IMR-90 (cell line): ENCODE measurements at regions of chr3 and their contacts with region 1.

Region 1: DNA sequence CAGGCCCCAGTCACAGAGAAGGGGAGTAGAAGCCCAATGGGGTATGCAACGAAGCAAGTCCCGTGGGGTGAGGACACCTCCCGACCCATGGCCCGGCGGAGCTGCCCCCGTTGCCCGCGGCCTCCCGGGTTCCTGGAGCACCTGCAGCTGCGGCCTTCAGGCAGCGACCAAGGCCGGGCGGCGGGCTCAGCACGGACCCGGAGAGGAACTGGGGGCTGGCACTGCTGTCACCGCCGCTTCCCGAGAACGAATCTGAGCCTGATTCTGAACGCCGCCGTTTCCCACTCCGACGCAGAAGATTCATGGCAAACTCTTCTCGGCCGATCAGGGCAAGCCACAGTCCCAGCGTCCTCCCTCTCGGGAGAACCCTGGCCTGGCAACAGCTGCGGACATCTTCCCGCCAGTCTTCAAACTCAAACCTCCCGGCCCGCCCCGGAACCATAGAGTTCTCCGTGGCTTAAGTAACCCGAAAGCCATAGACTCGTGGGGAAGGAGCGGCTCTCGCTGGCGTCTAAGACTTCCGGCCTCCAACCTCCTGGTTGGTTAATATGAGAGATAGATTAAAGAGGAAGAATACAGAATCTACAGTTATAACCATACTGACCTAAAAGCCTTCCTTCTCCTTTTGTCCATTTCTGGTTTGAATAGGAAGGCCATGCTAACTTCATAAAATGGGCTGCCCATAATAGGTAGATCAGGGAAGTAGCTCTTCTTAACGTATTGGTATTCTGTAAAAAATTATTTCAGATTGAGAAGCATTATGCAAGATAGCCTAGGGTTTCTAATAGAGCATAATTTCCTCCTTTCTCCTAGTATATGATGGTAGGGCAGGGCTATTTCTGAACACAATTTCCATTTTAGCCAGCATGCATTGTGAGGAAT is at the start of gene POLQ:
- DNase-seq: peak; percentile 95
- ATAC-seq: peak; percentile 96
- H3K4me3 ChIP-seq: peak within 1 kb of the TSS; percentile 69
- H3K27ac ChIP-seq: peak within 1 kb of the TSS; percentile 53
- H3K4me1 ChIP-seq: no peaks in the 10 kb centered on the region
- H3K27me3 ChIP-seq: no peaks in the 10 kb centered on the region
- CTCF ChIP-seq: no peak
- POLR2A ChIP-seq: peak; percentile 66; the same call in 1 of the 2 replicates
- RAD21 ChIP-seq: no peak
- total RNA-seq, gene POLQ: 5.0 and 7.5 TPM in 2 replicates

Region 2: DNA sequence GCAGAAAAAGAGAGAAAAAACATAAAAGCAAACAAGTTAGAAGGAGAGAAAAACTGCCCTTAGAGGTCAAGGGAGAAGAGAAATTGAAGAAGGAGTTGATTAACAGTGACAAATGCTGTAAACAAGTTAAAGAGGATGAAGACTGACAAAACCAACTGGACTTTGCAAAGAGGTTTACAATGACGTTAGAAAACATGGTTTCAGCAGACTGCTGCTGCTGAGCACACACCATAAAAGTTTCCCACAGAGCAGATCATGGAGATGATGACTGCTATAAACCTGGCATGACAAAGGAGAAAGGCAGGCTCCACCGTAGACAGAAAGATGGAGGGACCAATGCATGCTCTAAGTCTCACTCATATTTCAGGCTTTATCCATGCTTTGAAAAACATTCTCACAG is 78.7 kb before region 1 on chr3:
- CTCF ChIA-PET with region 1: no interaction called
- POLR2A ChIA-PET with region 1: no interaction called
- dilution Hi-C with region 1: no loop called
- in situ Hi-C with region 1: no loop called
- intact Hi-C with region 1: no loop called
- DNase-seq: no peak
- ATAC-seq: no peak
- H3K4me3 ChIP-seq: no peak overlapping the region
- H3K27ac ChIP-seq: no peak overlapping the region
- H3K4me1 ChIP-seq: peaks cover 2% of the 10 kb centered on the region; the same call in 1 of the 2 replicates
- H3K27me3 ChIP-seq: no peaks in the 10 kb centered on the region
- CTCF ChIP-seq: no peak
- POLR2A ChIP-seq: no peak
- RAD21 ChIP-seq: no peak

Region 3: GRCh38 chr3:121995161-121996137 is 449.6 kb after region 1 on chr3:
- CTCF ChIA-PET with region 1: no interaction called
- POLR2A ChIA-PET with region 1: no interaction called
- dilution Hi-C with region 1: no loop called
- in situ Hi-C with region 1: no loop called
- intact Hi-C with region 1: loop called (anchors 5 kb)
- DNase-seq: peak; percentile 75
- ATAC-seq: peak; percentile 77
- H3K4me3 ChIP-seq: no peak overlapping the region
- H3K27ac ChIP-seq: peak overlapping the region; percentile 69
- H3K4me1 ChIP-seq: peaks cover 6% of the 10 kb centered on the region
- H3K27me3 ChIP-seq: no peaks in the 10 kb centered on the region
- CTCF ChIP-seq: peak; percentile 44
- POLR2A ChIP-seq: no peak
- RAD21 ChIP-seq: 0 out of 2 replicates have a peak, but pooled peaks have one; percentile 13

Region 4: GRCh38 chr3:122101646-122102045 is 555.8 kb after region 1 on chr3:
- CTCF ChIA-PET with region 1: interaction called, 6 read pairs
- POLR2A ChIA-PET with region 1: no interaction called
- dilution Hi-C with region 1: no loop called
- in situ Hi-C with region 1: no loop called
- intact Hi-C with region 1: loop called (anchors 1 kb)
- DNase-seq: peak; percentile 66
- ATAC-seq: peak; percentile 72
- H3K4me3 ChIP-seq: no peak overlapping the region
- H3K27ac ChIP-seq: no peak overlapping the region
- H3K4me1 ChIP-seq: no peaks in the 10 kb centered on the region
- H3K27me3 ChIP-seq: peaks cover 13% of the 10 kb centered on the region
- CTCF ChIP-seq: peak; percentile 74
- POLR2A ChIP-seq: no peak
- RAD21 ChIP-seq: peak; percentile 82

Region 5: GRCh38 chr3:122299872-122300460 is 754.2 kb after region 1 on chr3:
- CTCF ChIA-PET with region 1: no interaction called
- POLR2A ChIA-PET with region 1: no interaction called
- dilution Hi-C with region 1: no loop called
- in situ Hi-C with region 1: no loop called
- intact Hi-C with region 1: loop called (anchors 5 kb)
- DNase-seq: peak; percentile 17
- ATAC-seq: no peak
- H3K4me3 ChIP-seq: no peak overlapping the region
- H3K27ac ChIP-seq: no peak overlapping the region
- H3K4me1 ChIP-seq: no peaks in the 10 kb centered on the region
- H3K27me3 ChIP-seq: no peaks in the 10 kb centered on the region
- CTCF ChIP-seq: peak; percentile 54
- POLR2A ChIP-seq: no peak
- RAD21 ChIP-seq: peak; percentile 56

Region 6: GRCh38 chr3:122679085-122679881 is 1133.5 kb after region 1 on chr3:
- CTCF ChIA-PET with region 1: no interaction called
- POLR2A ChIA-PET with region 1: no interaction called
- dilution Hi-C with region 1: no loop called
- in situ Hi-C with region 1: no loop called
- intact Hi-C with region 1: loop called (anchors 1 kb)
- DNase-seq: peak; percentile 79
- ATAC-seq: peak; percentile 74
- H3K4me3 ChIP-seq: peak overlapping the region; percentile 28
- H3K27ac ChIP-seq: peak overlapping the region; percentile 9; the same call in 1 of the 2 replicates
- H3K4me1 ChIP-seq: peaks cover 13% of the 10 kb centered on the region
- H3K27me3 ChIP-seq: no peaks in the 10 kb centered on the region
- CTCF ChIP-seq: peak; percentile 89
- POLR2A ChIP-seq: no peak
- RAD21 ChIP-seq: peak; percentile 87